ENCODE measurements at regions of chr15 and their contacts with region 1.

Region 1: DNA sequence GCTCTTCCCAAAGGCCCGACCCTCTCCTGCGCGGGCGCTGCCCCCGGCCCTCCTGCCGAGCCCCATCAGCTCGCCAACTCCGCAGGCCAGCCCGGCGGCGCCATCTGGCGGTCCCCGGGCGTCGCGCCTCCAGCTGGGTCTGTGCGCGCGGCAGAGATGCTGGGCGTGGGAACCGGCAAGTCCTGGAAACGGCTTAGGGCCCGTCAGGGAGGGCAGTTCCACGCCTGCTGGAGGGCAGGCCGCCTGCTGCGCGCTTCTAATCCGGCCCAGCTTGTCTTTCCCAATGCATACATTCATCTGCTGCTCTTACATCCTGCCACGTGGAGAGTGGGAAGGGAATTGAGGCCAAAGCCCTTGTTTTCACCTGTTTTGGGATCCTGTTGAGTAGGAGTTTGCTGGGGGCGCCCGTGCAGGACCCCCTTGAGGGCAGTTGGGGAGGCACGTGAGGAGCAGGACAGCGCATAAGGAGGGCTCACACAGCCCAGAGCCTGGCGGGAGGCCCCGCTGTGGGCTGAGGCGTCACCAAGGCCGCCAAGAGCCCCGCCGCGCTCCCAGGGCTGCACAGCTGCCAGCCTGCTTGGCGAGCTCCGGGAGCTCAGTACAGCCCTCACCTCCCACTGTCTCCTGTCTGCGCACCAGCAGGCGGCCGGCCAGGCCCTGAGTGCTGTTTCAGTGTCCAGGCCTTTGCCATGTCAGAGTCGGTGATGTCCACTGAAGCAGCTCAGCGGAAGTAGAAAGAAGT is 165.6 kb downstream of the NSMCE3 start:
- DNase-seq: peak; percentile 72
- ATAC-seq: peak; percentile 87
- H3K4me3 Mint-ChIP-seq: peak overlapping the region; percentile 16
- H3K27ac Mint-ChIP-seq: no peak overlapping the region
- H3K4me1 Mint-ChIP-seq: peaks cover 5% of the 10 kb centered on the region
- H3K27me3 Mint-ChIP-seq: no peaks in the 10 kb centered on the region
- CTCF ChIP-seq: peak; percentile 75

Region 2: DNA sequence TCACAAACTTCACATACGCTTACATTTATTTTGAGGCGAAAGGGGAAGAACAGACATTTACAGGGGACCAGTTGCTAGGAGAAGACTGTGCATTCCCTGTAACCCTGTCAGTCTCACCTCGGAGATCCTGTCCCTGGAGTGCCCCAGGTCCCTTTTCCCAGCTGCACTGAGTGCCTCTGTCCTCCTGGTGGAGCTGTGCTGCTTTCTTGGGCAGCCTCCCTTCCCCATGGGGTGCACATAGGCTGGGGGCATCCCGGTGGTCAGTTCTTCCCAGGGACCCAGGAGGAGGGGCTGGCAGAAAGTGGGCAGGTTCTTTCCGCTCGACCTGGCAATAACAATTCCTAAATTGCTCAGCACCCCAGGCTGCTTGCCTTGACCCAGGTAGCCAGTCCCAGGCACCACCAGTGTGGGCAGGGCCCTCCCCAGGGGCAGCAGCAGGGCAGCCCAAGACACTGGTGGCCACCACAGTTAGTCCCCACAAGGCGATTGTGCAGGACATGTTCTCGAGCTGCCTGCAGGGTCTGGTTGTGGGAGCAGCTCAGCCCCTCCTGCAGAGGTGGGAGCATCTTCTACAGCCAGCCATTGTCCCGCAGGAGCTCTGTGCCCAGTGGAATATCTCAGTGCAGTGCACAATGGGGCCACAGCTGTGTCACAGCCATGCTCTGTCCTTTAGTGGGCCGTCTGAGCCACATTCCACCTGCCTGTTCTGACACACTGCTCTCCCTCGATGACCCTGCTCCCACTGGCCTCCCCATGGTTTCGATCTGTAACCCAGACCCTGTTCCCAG is 181.9 kb before region 1 on chr15:
- CTCF ChIA-PET with region 1: interaction called, 13 read pairs
- POLR2A ChIA-PET with region 1: no interaction called
- intact Hi-C with region 1: no loop called
- DNase-seq: peak; percentile 10
- ATAC-seq: no peak
- H3K4me3 Mint-ChIP-seq: no peak overlapping the region
- H3K27ac Mint-ChIP-seq: no peak overlapping the region
- H3K4me1 Mint-ChIP-seq: peaks cover 64% of the 10 kb centered on the region
- H3K27me3 Mint-ChIP-seq: no peaks in the 10 kb centered on the region
- CTCF ChIP-seq: peak; percentile 37

Region 3: DNA sequence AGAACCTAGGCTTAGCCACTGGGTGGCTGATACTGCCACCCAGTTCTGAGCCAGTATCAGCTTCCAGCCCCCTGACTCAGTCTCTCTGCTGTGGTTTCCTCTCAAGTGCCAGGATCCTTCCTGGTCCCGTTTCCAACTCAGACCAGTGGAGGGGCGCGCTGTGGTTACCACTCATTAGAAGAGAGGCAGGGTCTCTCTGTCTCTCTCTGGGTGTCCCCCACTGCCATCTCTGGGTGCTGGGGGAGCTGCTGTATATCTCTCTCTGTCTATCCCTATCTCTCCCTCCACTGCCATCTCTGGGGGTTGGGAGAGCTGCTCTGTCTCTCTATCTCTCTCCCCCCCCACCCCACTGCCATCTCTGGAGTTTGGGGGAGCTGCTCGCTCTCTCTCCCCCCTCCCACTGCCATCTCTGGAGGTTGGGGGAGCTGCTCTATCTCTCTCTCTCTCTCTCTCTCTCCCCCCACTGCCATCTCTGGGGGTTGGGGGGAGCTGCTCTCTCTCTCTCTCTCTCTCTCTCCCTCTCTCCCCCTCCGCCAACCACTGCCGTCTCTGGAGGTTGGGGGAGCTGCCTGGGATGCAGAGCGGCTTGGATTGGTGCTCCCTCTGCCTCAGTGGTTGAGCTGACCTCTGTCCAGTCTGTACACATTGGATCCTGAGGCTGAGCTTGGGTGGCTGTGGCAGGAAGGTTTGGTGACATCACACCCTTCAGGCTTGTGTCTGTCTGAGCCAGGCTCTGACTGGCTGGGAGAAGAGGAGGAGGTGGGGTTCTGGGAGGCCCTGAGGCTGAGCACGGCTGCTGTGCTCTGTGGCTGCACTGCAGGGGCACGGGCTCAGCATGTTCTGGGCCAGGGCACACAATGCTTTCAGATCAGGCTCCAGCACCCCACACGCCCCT is 119.3 kb before region 1 on chr15:
- CTCF ChIA-PET with region 1: interaction called, 10 read pairs
- POLR2A ChIA-PET with region 1: no interaction called
- intact Hi-C with region 1: no loop called
- DNase-seq: peak; percentile 52
- ATAC-seq: peak; percentile 85
- H3K4me3 Mint-ChIP-seq: no peak overlapping the region
- H3K27ac Mint-ChIP-seq: peak overlapping the region; percentile 68
- H3K4me1 Mint-ChIP-seq: peaks cover 29% of the 10 kb centered on the region
- H3K27me3 Mint-ChIP-seq: no peaks in the 10 kb centered on the region
- CTCF ChIP-seq: no peak

Region 4: DNA sequence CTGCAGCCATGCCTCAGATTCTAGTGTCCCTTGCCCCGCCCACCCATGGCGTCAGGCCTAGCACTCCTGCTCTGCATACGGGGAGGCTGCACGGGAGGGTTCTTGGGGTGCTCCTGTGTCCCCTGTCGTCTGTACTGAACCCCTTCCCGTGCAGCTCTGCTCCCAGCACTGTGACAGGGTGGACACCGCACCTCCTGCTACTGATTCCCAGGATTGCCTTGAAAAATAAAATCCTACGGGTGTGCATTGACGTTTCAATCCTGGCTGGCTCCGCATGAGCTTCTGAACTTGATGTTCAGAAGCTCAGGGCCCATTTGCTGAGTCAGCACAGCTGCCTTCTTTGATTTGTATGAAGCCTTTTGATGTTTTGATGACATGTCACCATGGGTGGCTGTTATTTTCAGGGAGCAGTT is 41.8 kb before region 1 on chr15:
- CTCF ChIA-PET with region 1: no interaction called
- POLR2A ChIA-PET with region 1: no interaction called
- intact Hi-C with region 1: no loop called
- DNase-seq: no peak
- ATAC-seq: no peak
- H3K4me3 Mint-ChIP-seq: no peak overlapping the region
- H3K27ac Mint-ChIP-seq: no peak overlapping the region
- H3K4me1 Mint-ChIP-seq: peaks cover 61% of the 10 kb centered on the region
- H3K27me3 Mint-ChIP-seq: no peaks in the 10 kb centered on the region
- CTCF ChIP-seq: no peak

Region 5: DNA sequence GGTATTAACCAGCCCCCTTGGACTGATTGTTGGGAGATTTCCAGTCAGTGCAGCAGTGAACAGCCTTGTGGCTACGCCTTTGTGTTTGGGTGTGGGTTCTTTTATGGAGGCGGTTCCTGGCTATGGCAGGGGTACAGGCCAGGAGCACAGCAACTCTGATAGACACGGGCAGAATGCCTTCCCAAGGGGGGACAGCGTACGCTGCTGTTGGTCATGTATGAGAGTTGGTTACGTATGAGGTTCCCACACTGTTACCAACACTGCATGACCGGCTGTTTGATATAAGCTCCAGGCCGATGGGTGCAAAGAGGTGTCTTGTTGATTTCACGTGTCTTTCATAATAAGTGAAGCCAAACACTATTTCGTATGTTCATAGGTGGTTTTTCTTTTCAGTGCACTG is 22.2 kb before region 1 on chr15:
- CTCF ChIA-PET with region 1: interaction called, 26 read pairs
- POLR2A ChIA-PET with region 1: no interaction called
- intact Hi-C with region 1: no loop called
- DNase-seq: no peak
- ATAC-seq: no peak
- H3K4me3 Mint-ChIP-seq: no peak overlapping the region
- H3K27ac Mint-ChIP-seq: no peak overlapping the region
- H3K4me1 Mint-ChIP-seq: peaks cover 5% of the 10 kb centered on the region
- H3K27me3 Mint-ChIP-seq: no peaks in the 10 kb centered on the region
- CTCF ChIP-seq: no peak

Region 6: DNA sequence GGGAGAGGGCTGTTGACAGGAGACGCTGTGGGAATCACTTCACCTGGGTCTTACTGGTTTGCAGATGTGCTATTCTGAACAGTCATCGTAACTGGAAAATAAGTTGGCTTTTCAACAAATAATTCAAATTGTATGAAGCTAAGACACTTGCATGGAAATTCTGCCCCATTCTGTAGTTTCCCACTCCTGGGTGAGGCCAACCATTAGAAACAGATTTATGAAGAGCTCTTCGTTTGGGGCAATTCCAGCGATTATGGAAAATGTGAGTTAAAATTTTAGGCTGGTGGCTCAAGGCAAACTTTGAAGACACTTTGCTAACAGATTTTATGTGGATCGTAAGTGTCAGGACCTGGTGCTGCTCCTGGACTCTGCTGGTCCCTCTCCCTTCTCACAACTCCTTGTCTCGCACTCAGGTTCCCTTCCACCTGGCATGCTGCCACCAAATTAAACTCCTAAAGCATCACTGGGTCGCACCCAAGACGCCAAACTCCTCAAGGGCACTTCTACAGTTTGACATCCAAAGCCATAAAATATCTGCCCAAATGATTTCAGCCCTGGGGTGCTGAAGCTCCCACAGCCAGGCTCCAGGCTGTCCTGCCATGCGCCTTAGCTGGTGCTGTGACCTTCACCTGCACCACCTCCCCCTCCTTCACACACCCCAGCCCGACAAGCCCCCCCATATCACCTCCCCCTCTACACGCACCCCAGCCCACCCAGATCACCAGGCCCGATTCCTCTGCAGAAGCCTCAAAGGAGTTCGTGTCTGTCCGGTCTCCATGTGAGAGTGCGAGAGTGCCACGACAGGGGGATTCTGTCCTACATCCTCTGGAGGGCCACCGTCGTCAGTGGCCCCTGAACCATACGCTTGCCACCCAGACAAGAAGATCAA is 27.2 kb after region 1 on chr15:
- CTCF ChIA-PET with region 1: interaction called, 10 read pairs
- POLR2A ChIA-PET with region 1: no interaction called
- intact Hi-C with region 1: no loop called
- DNase-seq: no peak
- ATAC-seq: no peak
- H3K4me3 Mint-ChIP-seq: no peak overlapping the region
- H3K27ac Mint-ChIP-seq: no peak overlapping the region
- H3K4me1 Mint-ChIP-seq: peaks cover 3% of the 10 kb centered on the region
- H3K27me3 Mint-ChIP-seq: peaks cover 4% of the 10 kb centered on the region
- CTCF ChIP-seq: no peak

Region 7: GRCh38 chr15:29149738-29150075 is 45.7 kb after region 1 on chr15:
- CTCF ChIA-PET with region 1: no interaction called
- POLR2A ChIA-PET with region 1: no interaction called
- intact Hi-C with region 1: no loop called
- DNase-seq: no peak
- ATAC-seq: no peak
- H3K4me3 Mint-ChIP-seq: no peak overlapping the region
- H3K27ac Mint-ChIP-seq: no peak overlapping the region
- H3K4me1 Mint-ChIP-seq: peaks cover 2% of the 10 kb centered on the region
- H3K27me3 Mint-ChIP-seq: peaks cover 11% of the 10 kb centered on the region
- CTCF ChIP-seq: no peak